Activated CD4-positive, alpha-beta T cell treated with anti-CD3 and anti-CD28 coated beads for 36 hours (primary cell): ENCODE measurements at regions of chr16 and their contacts with region 1.

Region 1: DNA sequence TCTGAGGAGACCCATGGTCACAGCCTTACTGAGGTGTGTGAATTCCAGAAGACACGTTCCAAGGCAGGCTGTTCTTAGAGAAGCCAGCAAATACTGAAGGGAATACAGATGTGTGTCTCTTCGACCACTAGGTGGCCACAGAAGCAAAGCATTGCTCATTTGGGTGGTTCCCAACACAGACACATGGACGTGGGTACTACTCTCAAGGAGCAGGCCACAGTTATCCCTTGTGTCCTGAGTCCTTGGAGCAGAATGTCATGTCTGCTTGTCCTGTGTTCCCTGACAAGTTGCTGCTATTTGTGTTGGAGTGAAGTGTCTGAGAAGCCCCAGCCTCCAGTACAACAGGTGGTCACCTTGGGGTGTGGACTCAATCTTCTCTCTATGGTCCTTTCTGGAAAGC is 30.3 kb downstream of the HMOX2 start:
- DNase-seq: peak; percentile 75
- ATAC-seq: peak; percentile 72
- H3K4me3 Mint-ChIP-seq: no peak overlapping the region
- H3K27ac Mint-ChIP-seq: peak overlapping the region; percentile 81
- H3K4me1 Mint-ChIP-seq: peaks cover 48% of the 10 kb centered on the region
- H3K27me3 Mint-ChIP-seq: no peaks in the 10 kb centered on the region

Region 2: DNA sequence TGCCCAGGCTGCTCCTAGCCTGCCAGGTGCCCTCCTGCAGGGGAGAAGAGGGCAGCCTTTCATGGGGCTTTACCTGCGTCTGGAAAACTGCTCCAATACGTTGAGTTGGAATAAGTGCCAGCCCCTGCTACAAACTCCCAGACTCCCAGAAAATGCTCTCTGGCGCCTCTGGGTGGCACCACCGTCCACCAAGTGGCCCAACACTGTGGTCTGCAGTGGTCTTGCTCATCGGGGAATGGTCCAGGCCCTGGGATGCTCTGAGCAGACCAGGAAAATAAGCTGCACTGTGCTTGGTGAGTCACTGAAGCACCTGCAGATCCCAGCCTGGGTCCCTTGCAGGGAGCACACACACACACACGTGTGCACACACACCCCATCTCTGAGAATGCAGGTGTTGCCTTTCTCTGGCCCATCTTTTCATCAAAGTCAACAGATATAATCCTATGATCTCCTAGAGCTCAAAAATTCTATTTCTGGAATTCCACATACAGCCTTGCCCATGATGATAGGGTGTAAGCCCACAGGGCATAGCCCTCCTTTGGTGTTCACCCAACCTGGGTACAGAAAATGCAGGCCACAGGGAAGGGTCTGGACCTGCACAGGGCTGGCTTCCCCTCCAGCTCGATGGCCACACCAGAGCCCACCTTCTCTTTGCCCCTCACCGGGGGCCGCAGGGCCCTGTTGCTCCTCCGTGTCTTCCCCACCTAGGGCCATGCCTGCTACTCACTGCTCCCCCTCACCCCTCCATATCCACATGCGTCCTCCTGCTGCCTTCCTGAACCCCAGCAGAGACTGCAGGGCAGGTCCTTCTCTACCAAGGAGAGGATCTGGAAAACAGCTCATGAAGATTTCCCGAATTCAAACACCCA is 11.6 kb after region 1 on chr16:
- CTCF ChIA-PET with region 1: interaction called, 19 read pairs
- POLR2A ChIA-PET with region 1: no interaction called
- intact Hi-C with region 1: no loop called
- DNase-seq: peak; percentile 38
- ATAC-seq: no peak
- H3K4me3 Mint-ChIP-seq: no peak overlapping the region
- H3K27ac Mint-ChIP-seq: peak overlapping the region; percentile 47
- H3K4me1 Mint-ChIP-seq: peaks cover 39% of the 10 kb centered on the region
- H3K27me3 Mint-ChIP-seq: no peaks in the 10 kb centered on the region

Region 3: DNA sequence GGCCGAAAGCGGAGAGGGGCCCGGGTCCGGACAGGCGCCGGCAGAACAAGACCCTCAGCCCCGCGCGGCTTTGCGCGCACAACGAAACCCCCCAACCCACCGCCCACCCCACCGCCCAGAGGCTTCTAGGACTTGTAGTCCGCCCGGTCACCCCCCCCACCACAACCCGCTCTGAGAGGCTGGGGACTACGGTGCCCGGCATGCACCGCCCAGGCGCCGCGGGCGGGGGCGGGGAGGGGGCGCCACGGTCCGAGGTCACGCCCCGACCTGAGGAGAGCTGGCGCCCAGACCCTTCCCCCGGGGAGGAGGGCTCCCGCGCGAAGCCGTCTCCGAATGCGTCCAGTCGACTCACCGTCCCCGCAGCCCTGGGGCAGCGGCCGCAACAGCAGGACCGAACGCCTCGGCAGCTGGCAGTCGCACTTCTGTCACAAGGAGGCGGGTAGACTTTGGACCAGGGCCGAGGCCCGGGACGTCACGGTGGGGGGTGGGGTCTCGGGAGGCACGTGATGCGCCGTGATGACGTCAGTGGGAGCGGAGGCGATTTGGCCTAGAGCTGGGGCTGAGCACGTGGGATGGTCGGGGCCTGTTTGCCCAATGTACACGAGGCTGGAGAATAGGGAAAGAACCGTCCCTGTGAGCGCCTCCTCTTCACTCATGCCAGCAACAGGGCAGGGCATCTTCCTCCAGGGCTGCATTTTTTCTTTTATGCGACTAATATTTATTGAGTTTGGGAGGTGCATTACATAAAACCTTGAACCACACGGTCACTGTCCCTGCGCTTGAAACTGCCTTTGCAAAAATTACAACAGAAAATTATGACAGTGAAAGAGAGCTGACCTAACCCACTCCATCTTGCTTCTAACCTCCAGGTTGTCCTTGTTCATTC is 32.1 kb after region 1 on chr16 and contains the start of gene CDIP1:
- CTCF ChIA-PET with region 1: interaction called, 22 read pairs
- POLR2A ChIA-PET with region 1: no interaction called
- intact Hi-C with region 1: loop called in 1 of 2 experiments (anchors 5 kb)
- DNase-seq: peak; percentile 99
- ATAC-seq: peak; percentile 81
- H3K4me3 Mint-ChIP-seq: peak within 1 kb of the TSS; percentile 75
- H3K27ac Mint-ChIP-seq: peak within 1 kb of the TSS; percentile 63
- H3K4me1 Mint-ChIP-seq: peaks cover 41% of the 10 kb centered on the region
- H3K27me3 Mint-ChIP-seq: no peaks in the 10 kb centered on the region
- total RNA-seq, gene CDIP1: 28.3 to 30.2 TPM

Region 4: DNA sequence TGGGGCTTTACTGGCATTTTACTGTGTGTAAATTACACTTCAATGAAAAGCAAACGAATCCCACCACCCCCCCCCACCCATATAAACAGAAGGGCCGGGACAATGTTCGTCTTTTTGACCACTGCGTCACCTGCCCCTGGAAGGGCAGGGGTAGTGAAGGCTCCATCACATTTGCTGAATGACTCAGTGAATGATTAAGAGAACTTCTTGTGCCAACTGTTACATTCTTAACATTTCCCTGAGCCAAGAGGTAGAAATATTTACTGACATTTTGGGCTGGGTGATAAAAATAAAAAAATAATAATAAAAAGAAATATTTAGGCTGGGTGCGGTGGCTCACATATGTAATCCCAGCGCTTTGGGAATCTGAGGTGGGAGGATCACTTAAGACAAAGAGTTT is 73.8 kb after region 1 on chr16:
- CTCF ChIA-PET with region 1: interaction called, 44 read pairs
- POLR2A ChIA-PET with region 1: no interaction called
- intact Hi-C with region 1: loop called (anchors 1 kb)
- DNase-seq: no peak
- ATAC-seq: no peak
- H3K4me3 Mint-ChIP-seq: no peak overlapping the region
- H3K27ac Mint-ChIP-seq: no peak overlapping the region
- H3K4me1 Mint-ChIP-seq: no peaks in the 10 kb centered on the region
- H3K27me3 Mint-ChIP-seq: no peaks in the 10 kb centered on the region

Region 5: DNA sequence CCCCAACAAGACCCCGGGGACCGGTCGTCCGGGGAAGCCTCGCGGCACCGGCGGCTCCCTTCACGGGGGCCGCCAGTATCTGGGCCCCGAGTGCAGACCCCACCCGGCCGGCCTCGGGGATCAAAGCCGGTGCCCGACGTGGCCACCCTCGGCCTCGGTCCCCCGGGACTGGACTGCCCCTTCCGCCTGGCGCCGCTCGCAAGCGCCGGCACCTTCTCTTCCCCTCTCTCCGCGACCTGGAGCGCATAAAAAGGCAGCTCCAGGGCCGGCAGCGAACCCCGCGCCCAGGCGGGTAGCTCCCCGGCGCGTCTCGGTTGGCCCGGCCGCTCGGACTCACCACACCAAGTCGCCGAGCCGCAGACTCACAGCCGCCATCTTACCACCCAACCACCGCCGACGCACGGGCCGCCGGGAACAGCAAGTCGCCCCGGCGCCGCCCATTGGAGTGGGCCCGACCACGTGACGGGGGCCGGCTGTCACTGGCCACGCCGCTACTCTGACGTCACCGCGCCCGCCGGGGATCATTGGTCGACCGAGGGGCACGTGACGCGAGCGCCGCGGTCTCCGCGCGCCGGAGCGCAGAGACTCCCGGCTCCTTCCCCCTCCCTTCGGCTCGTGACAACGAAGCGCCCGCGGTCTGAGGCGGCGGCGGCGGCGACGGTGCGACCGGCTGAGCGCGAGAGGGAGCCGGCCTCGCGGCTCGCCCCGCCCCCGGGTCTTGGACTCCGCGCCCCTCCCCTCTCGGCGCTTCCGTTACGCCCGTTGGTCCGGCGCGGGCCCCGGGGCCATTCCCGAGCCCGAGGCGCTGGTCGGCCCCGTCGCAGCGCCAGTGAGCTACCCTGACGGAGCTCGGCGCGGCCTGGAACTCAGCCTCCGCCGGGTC is 340.7 kb after region 1 on chr16 and contains the starts of genes GLYR1 and UBN1:
- CTCF ChIA-PET with region 1: no interaction called
- POLR2A ChIA-PET with region 1: no interaction called
- intact Hi-C with region 1: no loop called
- DNase-seq: peak; percentile 100
- ATAC-seq: peak; percentile 96
- H3K4me3 Mint-ChIP-seq: peak within 1 kb of the TSS; percentile 77
- H3K27ac Mint-ChIP-seq: peak within 1 kb of the TSS; percentile 84
- H3K4me1 Mint-ChIP-seq: peaks cover 54% of the 10 kb centered on the region
- H3K27me3 Mint-ChIP-seq: no peaks in the 10 kb centered on the region
- total RNA-seq, gene GLYR1: 76.9 to 78.4 TPM
- total RNA-seq, gene UBN1: 19.3 to 23.0 TPM

Region 6: DNA sequence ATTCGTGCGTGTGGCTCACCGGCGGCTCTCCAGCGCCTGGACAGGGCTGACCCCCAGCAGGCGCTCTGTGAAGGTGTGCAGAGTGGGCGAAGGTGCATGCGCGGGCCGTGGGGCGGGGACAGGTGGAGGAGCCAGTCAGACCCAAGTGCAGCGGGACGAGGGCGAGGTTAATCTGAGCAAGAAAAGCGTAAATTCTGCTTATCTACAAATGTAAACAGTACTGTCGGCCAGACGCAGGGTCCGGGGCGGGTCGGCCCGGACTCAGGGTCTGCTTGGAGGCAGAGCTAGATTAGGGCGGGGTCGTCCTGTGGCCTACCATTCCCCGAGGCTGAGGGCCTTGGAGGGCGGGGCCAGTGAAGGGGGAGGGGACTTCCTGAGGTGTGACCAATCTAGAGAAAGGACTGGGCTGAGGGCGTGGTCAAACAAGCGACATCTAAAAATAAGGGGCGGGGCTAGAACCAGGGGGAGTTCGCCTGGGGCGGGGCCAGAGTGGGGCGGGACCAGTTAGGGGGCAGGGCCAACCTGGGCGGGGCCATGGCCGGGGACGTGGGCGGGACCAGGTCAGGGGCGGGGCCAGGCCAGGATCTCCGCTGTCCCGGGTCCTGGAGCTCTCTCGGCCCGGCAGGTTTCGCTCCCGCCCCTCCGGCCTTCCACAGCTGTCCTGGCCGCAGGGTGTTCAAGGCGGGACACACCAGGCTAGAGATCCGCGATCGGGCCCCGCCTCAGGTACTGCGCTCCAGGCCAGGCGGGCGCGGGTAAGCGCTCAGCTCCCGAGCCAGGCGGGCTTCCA is 451.5 kb after region 1 on chr16 and contains the start of gene SEC14L5:
- CTCF ChIA-PET with region 1: no interaction called
- POLR2A ChIA-PET with region 1: no interaction called
- intact Hi-C with region 1: loop called in 1 of 2 experiments (anchors 5 kb)
- DNase-seq: peak; percentile 98
- ATAC-seq: peak; percentile 95
- H3K4me3 Mint-ChIP-seq: peak within 1 kb of the TSS; percentile 75
- H3K27ac Mint-ChIP-seq: peak within 1 kb of the TSS; percentile 1
- H3K4me1 Mint-ChIP-seq: peaks cover 12% of the 10 kb centered on the region
- H3K27me3 Mint-ChIP-seq: peaks cover 33% of the 10 kb centered on the region
- total RNA-seq, gene SEC14L5: 0.09 to 0.28 TPM

Region 7: DNA sequence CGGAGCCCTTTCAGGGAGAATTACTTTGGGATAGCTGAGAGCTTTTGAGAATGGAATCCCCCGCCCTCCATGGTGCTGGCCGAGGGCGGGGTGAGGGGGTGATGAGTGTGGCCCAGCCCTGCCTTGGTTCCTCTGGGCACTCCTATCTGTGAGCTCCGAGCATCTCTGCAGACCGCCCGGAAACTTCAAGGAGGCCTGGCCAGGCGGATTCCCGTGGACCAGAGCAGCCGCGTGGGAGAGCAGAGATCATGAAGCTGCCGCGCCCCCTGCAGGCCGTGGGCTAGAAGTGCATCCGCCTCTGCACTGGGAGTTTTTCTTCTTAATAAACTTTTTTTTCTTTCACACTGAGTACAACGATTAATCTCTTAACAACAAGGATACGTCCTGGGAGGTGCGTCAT is 984.0 kb after region 1 on chr16:
- CTCF ChIA-PET with region 1: no interaction called
- POLR2A ChIA-PET with region 1: no interaction called
- intact Hi-C with region 1: no loop called
- DNase-seq: peak; percentile 66
- ATAC-seq: no peak
- H3K4me3 Mint-ChIP-seq: no peak overlapping the region
- H3K27ac Mint-ChIP-seq: no peak overlapping the region
- H3K4me1 Mint-ChIP-seq: no peaks in the 10 kb centered on the region
- H3K27me3 Mint-ChIP-seq: peaks cover 4% of the 10 kb centered on the region